ENCODE measurements at regions of chr10 and their contacts with region 1.

Region 1: GRCh38 chr10:123154092-123154921 is at the start of gene BUB3:
- DNase-seq: peak; percentile 85 to 99 (median 94)
- ATAC-seq: peak; percentile 87
- H3K4me3 ChIP-seq: peak within 1 kb of the TSS; percentile 81 to 98
- H3K4me3 Mint-ChIP-seq: peak within 1 kb of the TSS; percentile 100
- H3K27ac ChIP-seq: peak within 1 kb of the TSS; percentile 74 to 91
- H3K27ac Mint-ChIP-seq: peak within 1 kb of the TSS; percentile 99
- H3K4me1 ChIP-seq: peaks cover 71% of the 10 kb centered on the region
- H3K4me1 Mint-ChIP-seq: peaks cover 73% of the 10 kb centered on the region
- H3K27me3 ChIP-seq: peaks cover 7 to 22% of the 10 kb centered on the region in 2 experiments
- H3K27me3 Mint-ChIP-seq: peaks cover 11% of the 10 kb centered on the region
- CTCF ChIP-seq: no peak
- total RNA-seq, gene BUB3: 166 to 167 TPM

Region 2: DNA sequence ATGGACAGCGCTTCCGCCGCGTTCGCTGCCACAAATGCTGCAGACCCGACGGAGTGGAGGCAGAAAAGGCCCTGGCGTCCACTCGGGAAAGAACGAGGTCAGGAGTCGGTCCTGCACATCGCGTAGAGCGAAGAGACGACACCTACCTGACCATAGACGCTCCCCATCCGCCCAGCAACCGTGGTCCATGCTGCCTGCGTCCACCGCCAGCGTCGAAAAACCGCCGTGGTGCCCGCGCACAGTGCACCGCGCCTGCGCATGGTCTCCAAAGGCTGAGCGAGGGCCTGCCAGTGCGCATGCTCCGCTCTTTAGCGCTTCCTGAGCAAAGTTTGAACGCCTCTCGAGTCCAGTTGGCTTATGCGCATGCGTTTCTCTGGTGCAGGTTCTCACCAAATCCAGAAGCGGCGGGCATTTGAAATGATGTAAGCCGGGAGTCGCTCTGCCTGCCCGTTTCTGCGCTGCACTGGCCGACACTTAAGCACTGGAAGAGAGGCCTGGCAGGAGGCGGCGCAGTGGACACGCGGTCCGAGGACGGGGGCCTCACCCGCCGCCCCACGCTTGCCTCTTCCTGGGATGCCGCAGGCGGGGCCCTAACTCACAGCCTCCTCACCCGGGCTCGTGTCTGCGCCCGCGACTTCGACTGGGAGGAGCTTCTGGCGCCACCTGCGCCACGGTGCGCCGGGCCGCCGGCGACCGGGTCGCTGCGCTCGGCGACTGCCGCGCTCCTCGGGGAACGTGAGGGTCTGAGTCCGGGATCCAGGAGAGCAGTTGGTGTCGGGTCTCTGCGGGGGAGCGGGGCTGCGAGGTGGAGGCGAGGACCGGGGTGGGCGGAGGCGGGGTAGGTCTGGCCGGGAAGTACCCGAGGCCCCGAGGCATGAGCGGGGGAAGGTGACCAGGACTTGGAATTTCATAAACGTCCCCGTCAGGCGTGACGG is 274.7 kb before region 1 on chr10 and contains the start of gene FAM24B:
- CTCF ChIA-PET with region 1: no interaction called
- POLR2A ChIA-PET with region 1: no interaction called
- intact Hi-C with region 1: loop called (anchors 1 to 2 kb)
- DNase-seq: peak; percentile 87 to 99 (median 94)
- ATAC-seq: peak; percentile 86
- H3K4me3 ChIP-seq: peak within 1 kb of the TSS; percentile 56 to 75
- H3K4me3 Mint-ChIP-seq: peak within 1 kb of the TSS; percentile 93
- H3K27ac ChIP-seq: peak within 1 kb of the TSS; percentile 60 to 79
- H3K27ac Mint-ChIP-seq: peak within 1 kb of the TSS; percentile 88
- H3K4me1 ChIP-seq: peaks cover 34% of the 10 kb centered on the region
- H3K4me1 Mint-ChIP-seq: peaks cover 53% of the 10 kb centered on the region
- H3K27me3 ChIP-seq: no peaks in the 10 kb centered on the region
- H3K27me3 Mint-ChIP-seq: no peaks in the 10 kb centered on the region
- CTCF ChIP-seq: no peak
- total RNA-seq, gene FAM24B: 12.5 to 12.7 TPM

Region 3: DNA sequence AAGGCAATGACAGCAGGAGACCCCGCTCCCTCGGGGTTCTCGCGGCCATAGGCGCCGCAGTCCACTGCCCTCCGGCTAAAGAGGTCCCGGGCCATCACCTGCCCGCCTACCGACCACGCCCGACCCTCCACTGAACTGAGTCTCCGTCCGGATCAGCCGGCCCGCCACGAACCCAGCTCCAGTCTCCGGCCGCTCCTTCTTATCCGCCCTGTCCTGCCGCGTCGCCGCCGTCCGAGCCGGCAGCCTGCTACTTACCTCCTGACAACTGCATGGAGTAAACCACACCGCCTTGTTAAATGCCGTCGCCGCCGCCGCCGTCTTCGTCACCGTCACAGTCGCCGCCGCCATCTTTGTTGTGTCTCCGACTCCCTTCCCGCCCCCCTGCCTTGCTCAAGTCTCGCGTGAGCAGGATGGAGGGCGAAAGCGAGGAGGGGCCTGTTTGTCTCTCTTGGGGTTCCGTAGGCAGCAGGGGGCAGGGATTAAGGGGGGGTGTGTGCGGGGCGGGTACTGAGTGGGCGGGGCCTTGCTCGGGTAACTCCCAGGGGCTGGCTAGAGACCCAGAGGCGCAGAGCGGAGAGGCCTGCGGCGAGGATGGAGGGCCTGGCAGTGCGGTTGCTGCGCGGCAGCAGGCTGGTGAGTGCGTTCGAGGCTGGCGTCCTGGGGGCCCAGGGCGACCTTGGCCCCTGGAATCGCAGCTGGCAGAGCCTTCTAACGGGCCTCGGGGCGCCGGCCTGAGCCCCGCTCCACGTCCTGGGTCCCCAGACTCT is 145.7 kb before region 1 on chr10 and contains the starts of genes ACADSB and IKZF5:
- CTCF ChIA-PET with region 1: no interaction called
- POLR2A ChIA-PET with region 1: interaction called, 14 read pairs
- intact Hi-C with region 1: loop called (anchors 1 kb)
- DNase-seq: peak; percentile 92 to 99 (median 96)
- ATAC-seq: peak; percentile 89
- H3K4me3 ChIP-seq: peak within 1 kb of the TSS; percentile 89 to 100
- H3K4me3 Mint-ChIP-seq: peak within 1 kb of the TSS; percentile 97
- H3K27ac ChIP-seq: peak within 1 kb of the TSS; percentile 98 to 99
- H3K27ac Mint-ChIP-seq: peak within 1 kb of the TSS; percentile 99
- H3K4me1 ChIP-seq: peaks cover 48% of the 10 kb centered on the region
- H3K4me1 Mint-ChIP-seq: peaks cover 62% of the 10 kb centered on the region
- H3K27me3 ChIP-seq: no peaks in the 10 kb centered on the region
- H3K27me3 Mint-ChIP-seq: no peaks in the 10 kb centered on the region
- CTCF ChIP-seq: no peak
- total RNA-seq, gene ACADSB: 18.2 to 18.5 TPM
- total RNA-seq, gene IKZF5: 89.5 to 96.1 TPM

Region 4: DNA sequence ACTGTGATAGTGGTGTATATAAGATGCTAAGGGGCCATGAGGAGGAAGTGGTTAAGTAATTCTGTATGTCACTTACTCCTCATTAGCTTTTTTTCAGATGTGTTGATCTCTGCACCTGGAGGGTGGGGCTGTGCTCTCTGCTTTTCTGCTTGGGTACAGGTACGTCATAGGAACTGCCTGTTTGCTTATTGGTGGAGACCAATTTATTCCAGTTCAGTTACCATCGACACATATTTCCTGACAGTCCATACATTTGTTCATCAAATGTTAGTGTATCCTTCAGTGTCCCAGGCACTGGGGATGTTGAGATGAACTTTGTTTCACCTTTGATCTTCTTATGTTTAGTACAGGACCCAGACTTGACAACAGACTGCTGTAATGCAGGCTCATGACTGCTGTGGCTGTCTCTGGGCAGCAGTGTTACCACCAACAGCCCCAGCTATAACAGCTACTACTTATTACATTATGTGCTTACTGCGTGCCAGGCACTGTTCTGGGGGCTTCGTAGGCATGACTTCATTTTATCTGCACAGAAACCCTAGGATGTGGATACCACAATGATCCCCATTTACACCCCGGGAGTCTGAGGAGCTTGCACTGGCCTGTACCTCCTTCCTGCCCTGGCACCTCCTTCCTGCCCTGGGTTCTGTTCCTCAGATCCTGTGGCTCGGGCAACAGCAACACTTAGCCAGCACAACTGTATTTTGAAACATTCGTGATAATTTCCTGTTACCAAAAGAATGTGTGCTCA is 87.3 kb after region 1 on chr10:
- CTCF ChIA-PET with region 1: interaction called, 4 read pairs
- POLR2A ChIA-PET with region 1: interaction called, 12 read pairs
- intact Hi-C with region 1: loop called (anchors 1 to 2 kb)
- DNase-seq: peak; percentile 7 to 86 (median 57)
- ATAC-seq: peak; percentile 91
- H3K4me3 ChIP-seq: peak overlapping the region in 1 of 2 experiments; percentile 14
- H3K4me3 Mint-ChIP-seq: peak overlapping the region; percentile 59
- H3K27ac ChIP-seq: peak overlapping the region; percentile 90 to 92
- H3K27ac Mint-ChIP-seq: peak overlapping the region; percentile 99
- H3K4me1 ChIP-seq: peaks cover 24% of the 10 kb centered on the region
- H3K4me1 Mint-ChIP-seq: peaks cover 31% of the 10 kb centered on the region
- H3K27me3 ChIP-seq: no peaks in the 10 kb centered on the region
- H3K27me3 Mint-ChIP-seq: no peaks in the 10 kb centered on the region
- CTCF ChIP-seq: no peak

Region 5: GRCh38 chr10:123427392-123427791 is 273.1 kb after region 1 on chr10:
- CTCF ChIA-PET with region 1: no interaction called
- POLR2A ChIA-PET with region 1: no interaction called
- intact Hi-C with region 1: no loop called
- DNase-seq: no peak
- ATAC-seq: no peak
- H3K4me3 ChIP-seq: no peak overlapping the region
- H3K4me3 Mint-ChIP-seq: no peak overlapping the region
- H3K27ac ChIP-seq: no peak overlapping the region
- H3K27ac Mint-ChIP-seq: no peak overlapping the region
- H3K4me1 ChIP-seq: no peaks in the 10 kb centered on the region
- H3K4me1 Mint-ChIP-seq: no peaks in the 10 kb centered on the region
- H3K27me3 ChIP-seq: peaks cover 0 to 2% of the 10 kb centered on the region in 2 experiments
- H3K27me3 Mint-ChIP-seq: peaks cover 22% of the 10 kb centered on the region
- CTCF ChIP-seq: no peak

Region 6: DNA sequence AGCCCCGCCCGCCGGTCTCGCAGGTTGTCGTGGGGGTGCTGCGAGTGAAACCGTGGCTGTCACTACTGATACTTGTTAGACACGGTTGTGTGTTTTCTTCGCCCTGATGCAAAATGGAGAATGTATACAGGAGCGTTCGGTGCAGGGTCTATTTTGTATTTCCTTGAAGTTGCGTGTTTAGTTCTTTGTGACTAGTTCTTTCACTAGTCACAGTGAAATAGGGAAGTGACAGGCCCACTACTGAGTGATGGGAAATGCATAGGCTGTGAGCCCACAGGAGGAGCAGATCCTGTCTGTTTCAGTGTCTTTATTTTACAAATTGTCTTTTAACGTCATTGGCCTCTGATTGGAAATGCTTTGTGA is 1648.0 kb after region 1 on chr10:
- CTCF ChIA-PET with region 1: no interaction called
- POLR2A ChIA-PET with region 1: no interaction called
- intact Hi-C with region 1: loop called in 1 of 2 experiments (anchors 5 kb)
- DNase-seq: peak in 3 of 9 experiments; percentile 5 to 38 (median 19)
- ATAC-seq: no peak
- H3K4me3 ChIP-seq: peak overlapping the region; percentile 73 to 90
- H3K4me3 Mint-ChIP-seq: peak overlapping the region; percentile 94
- H3K27ac ChIP-seq: peak overlapping the region; percentile 36 to 76
- H3K27ac Mint-ChIP-seq: peak overlapping the region; percentile 91
- H3K4me1 ChIP-seq: peaks cover 12% of the 10 kb centered on the region
- H3K4me1 Mint-ChIP-seq: peaks cover 25% of the 10 kb centered on the region
- H3K27me3 ChIP-seq: no peaks in the 10 kb centered on the region
- H3K27me3 Mint-ChIP-seq: peaks cover 2% of the 10 kb centered on the region
- CTCF ChIP-seq: no peak

Measured in CD8-positive, alpha-beta T cell (primary cell).